Motor neuron (in vitro differentiated cells): ENCODE measurements at regions of chr18 and their contacts with region 1.

Region 1: DNA sequence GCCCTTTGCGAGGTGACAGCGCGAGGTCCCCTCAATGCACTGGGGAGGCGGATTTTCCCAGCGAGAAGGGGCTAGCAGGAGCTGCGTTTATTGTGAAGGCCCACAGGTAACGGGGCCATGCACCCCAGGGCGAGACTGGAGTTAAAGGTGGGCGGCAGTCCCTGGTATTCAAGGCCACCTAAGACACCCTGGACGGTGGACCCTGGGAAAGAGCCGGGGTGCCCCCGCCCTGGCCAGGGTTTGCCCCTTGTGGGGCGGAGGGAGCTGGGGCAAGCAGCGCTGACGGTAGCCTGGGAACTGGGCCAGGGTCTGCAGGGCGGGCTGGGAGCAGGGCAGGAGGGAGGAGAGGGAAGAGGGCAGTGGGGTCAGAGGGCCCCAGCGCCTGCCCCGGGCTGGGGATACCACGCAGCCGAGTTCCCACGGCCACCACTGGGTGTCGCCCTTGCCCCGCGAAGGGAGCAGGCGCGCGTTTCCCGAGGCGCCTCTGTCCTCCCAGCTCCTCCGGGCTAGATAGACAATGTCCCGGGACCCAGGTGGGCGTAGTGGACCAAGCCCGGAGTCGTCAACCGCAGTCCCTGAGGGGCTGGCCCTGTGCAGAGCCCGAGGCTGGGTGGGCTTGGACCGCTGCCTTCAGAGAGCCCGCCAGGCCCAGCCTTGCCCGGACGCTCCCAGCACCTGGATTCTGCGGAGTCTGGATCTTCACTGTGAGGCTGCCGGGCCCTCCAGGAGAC is 80.2 kb downstream of the SMAD4 start:
- ATAC-seq: peak; percentile 75 to 99 (median 92)
- H3K4me3 ChIP-seq: no peak overlapping the region
- H3K27ac ChIP-seq: no peak overlapping the region
- H3K4me1 ChIP-seq: no peaks in the 10 kb centered on the region

Region 2: DNA sequence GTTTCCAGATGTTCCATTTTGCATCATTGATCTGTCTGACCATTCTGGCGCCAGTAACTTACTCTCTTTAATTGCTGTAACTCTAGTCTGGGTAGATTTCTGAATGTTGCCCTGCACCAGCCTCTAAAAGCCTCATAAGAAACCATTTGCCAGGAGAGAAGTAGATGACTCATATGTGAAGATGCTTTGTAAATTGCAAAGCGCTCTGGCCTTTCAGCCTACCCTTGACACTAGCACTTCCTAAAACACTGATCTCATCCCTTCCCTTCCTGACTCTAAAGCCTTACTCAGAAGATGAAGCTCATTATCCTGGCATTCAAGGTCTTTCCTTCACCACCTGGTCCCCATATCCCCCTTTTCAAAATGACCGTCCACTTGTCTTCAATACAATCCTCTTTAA is 280.5 kb after region 1 on chr18:
- in situ Hi-C with region 1: loop called in 1 of 9 experiments (anchors 25 kb)
- ATAC-seq: peak in 6 of 8 experiments; percentile 27 to 87 (median 72)
- H3K4me3 ChIP-seq: no peak overlapping the region
- H3K27ac ChIP-seq: no peak overlapping the region
- H3K4me1 ChIP-seq: no peaks in the 10 kb centered on the region

Region 3: DNA sequence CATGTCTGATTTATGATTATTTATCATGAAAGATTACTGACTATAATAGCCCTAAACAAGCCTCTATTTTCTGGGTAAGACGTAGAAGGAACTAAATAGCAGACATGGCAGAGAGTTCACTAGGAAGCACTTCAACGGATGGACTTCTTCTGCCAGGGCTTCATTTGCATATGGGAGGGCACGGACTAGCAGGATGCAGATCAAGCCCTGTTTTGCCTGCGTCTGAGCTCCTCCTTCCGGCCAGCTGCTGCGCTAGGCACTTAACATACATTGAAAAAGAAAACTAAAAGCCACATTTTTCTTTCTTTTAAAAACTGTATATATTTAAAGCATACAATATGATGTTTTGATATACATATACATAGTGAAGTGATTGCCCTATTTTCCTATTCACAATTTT is 427.2 kb after region 1 on chr18:
- in situ Hi-C with region 1: loop called in 1 of 9 experiments (anchors 25 kb)
- ATAC-seq: peak; percentile 59 to 99 (median 78)
- H3K4me3 ChIP-seq: no peak overlapping the region
- H3K27ac ChIP-seq: no peak overlapping the region
- H3K4me1 ChIP-seq: no peaks in the 10 kb centered on the region